GM12878 (cell line): ENCODE measurements at regions of chr9 and their contacts with region 1.

Region 1: DNA sequence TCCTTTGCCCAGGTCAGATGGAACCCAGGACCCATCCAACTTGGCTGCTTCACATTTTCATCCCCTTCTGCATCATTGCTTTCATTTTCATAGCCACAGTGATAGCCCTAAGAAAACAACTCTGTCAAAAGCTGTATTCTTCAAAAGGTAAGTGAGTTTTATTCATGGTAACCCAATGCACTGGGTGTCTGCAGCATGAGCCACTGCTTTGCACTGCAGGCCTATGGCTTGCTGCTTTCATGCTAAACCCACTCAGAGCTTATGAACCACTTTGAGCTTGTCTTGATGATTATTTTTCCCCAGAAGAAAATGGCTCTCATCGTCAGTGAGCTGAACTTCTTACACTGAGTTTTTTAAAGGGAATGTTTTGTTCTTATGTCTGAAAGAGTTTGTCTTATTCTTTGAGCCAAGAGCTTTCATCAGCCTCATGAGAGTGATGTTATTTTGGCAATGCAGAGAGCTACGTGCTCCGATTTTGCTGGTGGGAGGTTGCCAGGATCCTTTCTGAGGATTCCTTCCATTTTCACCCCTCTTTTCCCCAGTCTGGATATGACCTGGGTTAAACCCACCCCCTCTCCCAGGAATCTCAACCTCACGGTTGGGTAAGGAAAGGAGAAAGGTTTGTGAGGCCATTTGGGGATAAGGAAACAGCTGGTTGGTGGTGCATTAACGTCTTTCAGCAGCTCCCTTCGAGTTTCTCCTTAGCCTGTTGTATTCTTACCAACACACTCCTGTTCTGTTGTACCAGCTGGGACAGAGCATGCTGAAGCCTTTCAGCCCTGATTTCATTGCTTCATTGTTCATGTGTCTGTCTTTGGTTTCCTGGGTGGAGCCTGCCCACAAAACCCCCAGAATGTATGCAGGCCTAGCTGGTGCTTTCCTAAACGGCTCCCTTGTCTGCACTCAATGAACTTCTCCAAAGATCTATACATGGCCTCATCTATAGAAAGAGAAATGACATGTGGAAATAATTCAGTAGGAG is 47.6 kb downstream of the PDCD1LG2 start:
- DNase-seq: no peak
- ATAC-seq: peak; percentile 88
- H3K4me3 ChIP-seq: no peak overlapping the region
- H3K27ac ChIP-seq: peak overlapping the region; percentile 66
- H3K4me1 ChIP-seq: peaks cover 27% of the 10 kb centered on the region
- H3K27me3 ChIP-seq: no peaks in the 10 kb centered on the region
- CTCF ChIP-seq: no peak
- EP300 ChIP-seq: no peak
- POLR2A ChIP-seq: no peak
- RAD21 ChIP-seq: no peak

Region 2: DNA sequence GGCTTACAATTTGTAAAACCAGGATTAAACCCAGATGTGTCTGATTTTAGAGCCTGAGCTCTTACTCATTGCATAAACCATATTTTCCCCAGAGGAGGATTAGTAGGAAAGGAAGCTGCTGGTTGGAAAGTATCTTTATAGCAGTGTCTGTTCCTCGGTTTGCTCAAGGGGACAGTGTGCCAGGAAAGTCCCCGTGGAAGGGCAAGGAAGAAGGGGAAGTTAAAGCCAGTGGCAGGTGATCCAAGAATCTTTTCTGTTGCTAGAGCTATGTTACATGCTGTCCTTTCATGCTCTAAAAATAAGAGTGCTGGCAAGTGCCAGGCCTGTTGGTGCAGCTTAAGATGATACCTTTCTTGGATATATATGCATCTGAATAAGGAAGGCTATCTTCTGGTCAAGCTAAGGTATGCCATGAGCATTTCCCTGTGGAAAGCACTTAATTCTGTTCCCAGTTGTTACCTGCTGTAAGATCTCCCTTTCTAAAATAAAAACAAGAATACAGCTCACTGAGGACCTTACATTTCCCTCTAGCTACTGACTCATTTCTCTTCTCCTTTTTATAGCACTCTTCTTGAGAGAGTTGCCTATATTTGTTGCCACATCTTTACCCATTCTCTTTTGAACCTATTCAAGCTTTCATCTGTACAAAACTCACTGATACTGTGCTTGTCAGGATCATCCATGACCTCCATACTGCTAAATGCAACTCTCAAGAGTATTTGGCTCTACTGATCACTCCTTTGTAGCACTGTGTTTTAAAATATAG is 39.5 kb before region 1 on chr9:
- CTCF ChIA-PET with region 1: interaction called, 6 read pairs
- POLR2A ChIA-PET with region 1: interaction called, 21 read pairs
- RAD21 ChIA-PET with region 1: interaction called, 34 read pairs
- SMC1A ChIA-PET with region 1: interaction called, 35 read pairs
- in situ Hi-C with region 1: no loop called
- intact Hi-C with region 1: no loop called
- DNase-seq: no peak
- ATAC-seq: peak; percentile 49
- H3K4me3 ChIP-seq: peak overlapping the region; percentile 35; the same call in 1 of the 2 replicates
- H3K27ac ChIP-seq: peak overlapping the region; percentile 58
- H3K4me1 ChIP-seq: peaks cover 47% of the 10 kb centered on the region
- H3K27me3 ChIP-seq: no peaks in the 10 kb centered on the region
- CTCF ChIP-seq: no peak
- EP300 ChIP-seq: no peak
- POLR2A ChIP-seq: no peak
- RAD21 ChIP-seq: 0 out of 2 replicates have a peak, but pooled peaks have one; percentile 17

Region 3: GRCh38 chr9:5529683-5530221 is 28.1 kb before region 1 on chr9:
- CTCF ChIA-PET with region 1: interaction called, 7 read pairs
- POLR2A ChIA-PET with region 1: interaction called, 23 read pairs
- RAD21 ChIA-PET with region 1: interaction called, 11 read pairs
- SMC1A ChIA-PET with region 1: interaction called, 58 read pairs
- in situ Hi-C with region 1: no loop called
- intact Hi-C with region 1: no loop called
- DNase-seq: peak; percentile 73
- ATAC-seq: peak; percentile 62
- H3K4me3 ChIP-seq: peak overlapping the region; percentile 47; the same call in 1 of the 2 replicates
- H3K27ac ChIP-seq: peak overlapping the region; percentile 93
- H3K4me1 ChIP-seq: peaks cover 43% of the 10 kb centered on the region
- H3K27me3 ChIP-seq: no peaks in the 10 kb centered on the region
- CTCF ChIP-seq: no peak
- EP300 ChIP-seq: peak; percentile 9 to 59; a peak in 1 of 4 replicates
- POLR2A ChIP-seq: no peak
- RAD21 ChIP-seq: 0 out of 2 replicates have a peak, but pooled peaks have one; percentile 0

Region 4: GRCh38 chr9:5543875-5544702 is 13.8 kb before region 1 on chr9:
- CTCF ChIA-PET with region 1: interaction called, 6 read pairs
- POLR2A ChIA-PET with region 1: interaction called, 6 read pairs
- RAD21 ChIA-PET with region 1: no interaction called
- SMC1A ChIA-PET with region 1: interaction called, 26 read pairs
- in situ Hi-C with region 1: no loop called
- intact Hi-C with region 1: no loop called
- DNase-seq: no peak
- ATAC-seq: peak; percentile 52
- H3K4me3 ChIP-seq: no peak overlapping the region
- H3K27ac ChIP-seq: no peak overlapping the region
- H3K4me1 ChIP-seq: no peaks in the 10 kb centered on the region; the same call in none of the 2 replicates
- H3K27me3 ChIP-seq: no peaks in the 10 kb centered on the region
- CTCF ChIP-seq: no peak
- EP300 ChIP-seq: no peak
- POLR2A ChIP-seq: no peak
- RAD21 ChIP-seq: no peak